Activated T-helper 1 cell treated with anti-CD3 and anti-CD28 coated beads, Interleukin-12 subunit alpha, Interleukin-12 subunit beta, Interleukin-2, Interleukin-4 antibody, amounts not matched to agents 30 ng/mL and 10 ng/mL and 1 ng/mL, durations not matched to agents 14 hours and 24 hours and 36 hours (primary cell): ENCODE measurements at regions of chrX and their contacts with region 1.

Region 1: GRCh38 chrX:39814391-39814790 is 283.4 kb downstream of the BCOR start:
- DNase-seq: peak; percentile 8
- H3K4me3 Mint-ChIP-seq: no peak overlapping the region
- H3K27ac Mint-ChIP-seq: no peak overlapping the region
- H3K4me1 Mint-ChIP-seq: peaks cover 42% of the 10 kb centered on the region
- H3K27me3 Mint-ChIP-seq: no peaks in the 10 kb centered on the region

Region 2: GRCh38 chrX:39730662-39731397 is 83.6 kb before region 1 on chrX:
- intact Hi-C with region 1: loop called (anchors 2 kb)
- DNase-seq: peak; percentile 31
- H3K4me3 Mint-ChIP-seq: peak overlapping the region; percentile 54
- H3K27ac Mint-ChIP-seq: peak overlapping the region; percentile 84
- H3K4me1 Mint-ChIP-seq: peaks cover 30% of the 10 kb centered on the region
- H3K27me3 Mint-ChIP-seq: no peaks in the 10 kb centered on the region

Region 3: GRCh38 chrX:39874202-39874816 is 59.9 kb after region 1 on chrX:
- intact Hi-C with region 1: loop called (anchors 5 kb)
- DNase-seq: peak; percentile 68
- H3K4me3 Mint-ChIP-seq: peak overlapping the region; percentile 53
- H3K27ac Mint-ChIP-seq: peak overlapping the region; percentile 88
- H3K4me1 Mint-ChIP-seq: peaks cover 47% of the 10 kb centered on the region
- H3K27me3 Mint-ChIP-seq: peaks cover 6% of the 10 kb centered on the region

Region 4: GRCh38 chrX:40013266-40014195 is 199.1 kb after region 1 on chrX:
- intact Hi-C with region 1: loop called (anchors 5 kb)
- DNase-seq: peak; percentile 43
- H3K4me3 Mint-ChIP-seq: peak overlapping the region; percentile 74
- H3K27ac Mint-ChIP-seq: peak overlapping the region; percentile 75
- H3K4me1 Mint-ChIP-seq: peaks cover 11% of the 10 kb centered on the region
- H3K27me3 Mint-ChIP-seq: peaks cover 6% of the 10 kb centered on the region

Region 5: DNA sequence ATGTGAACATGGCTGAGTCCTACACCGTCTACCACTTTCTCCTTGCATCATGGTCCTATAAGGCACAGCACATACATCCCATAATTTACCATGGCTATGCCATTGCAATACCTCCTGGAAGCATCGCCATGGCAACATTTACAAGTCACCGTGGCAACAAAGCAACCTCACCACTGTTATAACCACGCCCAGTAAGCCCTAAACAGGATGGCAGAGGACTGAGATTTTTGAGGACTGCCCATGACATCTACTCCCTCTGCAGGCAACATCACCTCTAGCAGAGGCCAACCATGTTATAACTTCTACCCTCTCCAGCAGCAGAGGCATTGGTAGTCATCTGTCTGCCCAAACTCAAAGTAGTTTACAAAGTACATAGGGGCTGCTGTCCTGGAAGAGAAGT is 253.7 kb after region 1 on chrX:
- intact Hi-C with region 1: loop called (anchors 1 kb)
- DNase-seq: peak; percentile 17
- H3K4me3 Mint-ChIP-seq: no peak overlapping the region
- H3K27ac Mint-ChIP-seq: peak overlapping the region; percentile 50
- H3K4me1 Mint-ChIP-seq: peaks cover 67% of the 10 kb centered on the region
- H3K27me3 Mint-ChIP-seq: no peaks in the 10 kb centered on the region

Region 6: GRCh38 chrX:40266490-40267333 is 452.3 kb after region 1 on chrX:
- intact Hi-C with region 1: loop called (anchors 10 kb)
- DNase-seq: peak; percentile 8
- H3K4me3 Mint-ChIP-seq: peak overlapping the region; percentile 73
- H3K27ac Mint-ChIP-seq: no peak overlapping the region
- H3K4me1 Mint-ChIP-seq: peaks cover 6% of the 10 kb centered on the region
- H3K27me3 Mint-ChIP-seq: peaks cover 2% of the 10 kb centered on the region